B cell (primary cell): ENCODE measurements at regions of chr4 and their contacts with region 1.

Region 1: GRCh38 chr4:109702950-109703663 is at the start of gene CASP6:
- DNase-seq: peak; percentile 78
- ATAC-seq: peak; percentile 80
- H3K4me3 ChIP-seq: peak within 1 kb of the TSS; percentile 69 to 86 (median 78)
- H3K4me3 Mint-ChIP-seq: peak within 1 kb of the TSS; percentile 97
- H3K27ac ChIP-seq: peak within 1 kb of the TSS; percentile 11 to 57
- H3K27ac Mint-ChIP-seq: peak within 1 kb of the TSS; percentile 88
- H3K4me1 ChIP-seq: peaks cover 14 to 18% of the 10 kb centered on the region in 2 donors
- H3K4me1 Mint-ChIP-seq: peaks cover 22% of the 10 kb centered on the region
- H3K27me3 ChIP-seq: no peaks in the 10 kb centered on the region
- H3K27me3 Mint-ChIP-seq: no peaks in the 10 kb centered on the region
- CTCF ChIP-seq: peak; percentile 72
- total RNA-seq, gene CASP6: 7.7 and 8.3 TPM in 2 replicates

Region 2: GRCh38 chr4:109719604-109720003 is 16.5 kb after region 1 on chr4:
- CTCF ChIA-PET with region 1: no interaction called
- POLR2A ChIA-PET with region 1: no interaction called
- intact Hi-C with region 1: no loop called
- DNase-seq: no peak
- ATAC-seq: no peak
- H3K4me3 ChIP-seq: no peak overlapping the region
- H3K4me3 Mint-ChIP-seq: no peak overlapping the region
- H3K27ac ChIP-seq: no peak overlapping the region
- H3K27ac Mint-ChIP-seq: no peak overlapping the region
- H3K4me1 ChIP-seq: peaks cover 8 to 12% of the 10 kb centered on the region in 2 donors
- H3K4me1 Mint-ChIP-seq: peaks cover 7% of the 10 kb centered on the region
- H3K27me3 ChIP-seq: no peaks in the 10 kb centered on the region
- H3K27me3 Mint-ChIP-seq: no peaks in the 10 kb centered on the region
- CTCF ChIP-seq: no peak

Region 3: DNA sequence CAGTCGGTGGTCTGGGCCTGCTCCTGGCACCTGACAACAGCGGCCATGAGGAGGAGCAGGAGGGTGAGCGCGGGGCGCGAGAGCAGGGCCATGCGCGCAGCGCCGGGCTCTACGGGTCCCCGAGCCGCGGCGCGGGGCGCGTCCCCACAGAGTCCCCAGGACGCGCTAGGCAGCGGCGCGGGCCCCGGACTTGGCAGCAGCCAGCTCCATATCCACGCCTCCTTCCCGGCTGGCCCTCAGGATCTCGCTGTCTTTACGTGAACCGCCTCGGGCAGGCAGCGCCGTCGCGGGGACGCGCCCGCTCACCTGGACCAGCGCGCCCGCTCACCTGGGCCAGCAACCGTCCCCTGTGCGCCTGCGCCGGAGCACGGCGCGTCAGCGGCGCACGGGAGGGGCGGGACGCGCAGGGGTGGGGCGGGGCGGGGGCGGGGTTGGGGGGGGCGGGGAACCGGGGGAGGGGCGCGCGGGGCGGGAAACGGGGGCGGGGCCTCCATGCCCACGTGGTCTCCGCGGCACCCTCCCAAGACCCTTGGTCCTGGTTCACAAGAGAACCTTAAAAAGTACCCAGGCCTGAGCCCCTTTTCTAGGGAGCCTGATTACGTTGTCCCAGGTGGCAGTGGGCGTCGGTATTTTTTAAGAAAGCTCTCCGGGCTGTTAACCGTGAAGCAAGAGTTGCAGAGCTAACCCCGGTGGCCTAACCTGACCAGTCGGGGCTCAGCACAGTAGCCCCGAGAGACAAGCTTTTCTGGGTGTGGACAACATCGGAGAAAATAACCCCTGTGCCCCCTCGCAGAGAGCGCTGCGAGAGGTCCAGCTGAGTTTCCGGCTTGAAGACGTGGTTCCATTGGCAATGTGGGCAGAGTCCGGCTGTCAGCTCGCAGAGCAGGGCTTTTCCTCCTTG is 26.9 kb after region 1 on chr4 and contains the start of gene PLA2G12A:
- CTCF ChIA-PET with region 1: interaction called, 7 read pairs
- POLR2A ChIA-PET with region 1: interaction called, 6 read pairs
- intact Hi-C with region 1: loop called (anchors 1 kb)
- DNase-seq: peak; percentile 90
- ATAC-seq: peak; percentile 88
- H3K4me3 ChIP-seq: peak within 1 kb of the TSS; percentile 75 to 95 (median 83)
- H3K4me3 Mint-ChIP-seq: peak within 1 kb of the TSS; percentile 94
- H3K27ac ChIP-seq: peak within 1 kb of the TSS; percentile 41 to 68
- H3K27ac Mint-ChIP-seq: peak within 1 kb of the TSS; percentile 84
- H3K4me1 ChIP-seq: peaks cover 6 to 10% of the 10 kb centered on the region in 2 donors
- H3K4me1 Mint-ChIP-seq: peaks cover 13% of the 10 kb centered on the region
- H3K27me3 ChIP-seq: no peaks in the 10 kb centered on the region
- H3K27me3 Mint-ChIP-seq: no peaks in the 10 kb centered on the region
- CTCF ChIP-seq: no peak
- total RNA-seq, gene PLA2G12A: 7.9 and 8.5 TPM in 2 replicates

Region 4: DNA sequence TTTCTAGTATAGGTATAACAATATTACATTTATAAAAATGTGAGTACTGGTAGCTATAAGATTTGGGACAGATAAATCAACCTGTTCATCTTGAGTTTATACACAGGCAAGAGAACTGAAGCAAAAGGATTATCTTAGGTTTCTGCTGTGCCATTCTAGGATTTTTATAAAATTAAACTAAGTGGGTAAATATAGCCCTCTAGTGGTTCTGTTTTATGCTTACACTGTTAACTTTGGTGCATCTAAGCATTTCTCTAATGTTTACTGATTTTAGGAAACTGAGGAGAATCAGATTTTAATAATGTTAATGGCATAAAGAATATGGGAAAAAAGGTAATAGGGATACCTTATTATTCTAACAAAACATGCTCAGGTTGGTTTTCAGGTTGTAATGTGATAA is 123.6 kb after region 1 on chr4:
- CTCF ChIA-PET with region 1: interaction called, 3 read pairs
- POLR2A ChIA-PET with region 1: no interaction called
- intact Hi-C with region 1: loop called (anchors 1 kb)
- DNase-seq: peak; percentile 30
- ATAC-seq: peak; percentile 24
- H3K4me3 ChIP-seq: no peak overlapping the region
- H3K4me3 Mint-ChIP-seq: no peak overlapping the region
- H3K27ac ChIP-seq: no peak overlapping the region
- H3K27ac Mint-ChIP-seq: no peak overlapping the region
- H3K4me1 ChIP-seq: no peaks in the 10 kb centered on the region
- H3K4me1 Mint-ChIP-seq: no peaks in the 10 kb centered on the region
- H3K27me3 ChIP-seq: no peaks in the 10 kb centered on the region
- H3K27me3 Mint-ChIP-seq: no peaks in the 10 kb centered on the region
- CTCF ChIP-seq: peak; percentile 76

Region 5: GRCh38 chr4:110193822-110194761 is 491.0 kb after region 1 on chr4:
- CTCF ChIA-PET with region 1: no interaction called
- POLR2A ChIA-PET with region 1: no interaction called
- intact Hi-C with region 1: loop called (anchors 10 kb)
- DNase-seq: peak; percentile 82
- ATAC-seq: peak; percentile 78
- H3K4me3 ChIP-seq: no peak overlapping the region
- H3K4me3 Mint-ChIP-seq: peak overlapping the region; percentile 4
- H3K27ac ChIP-seq: peak overlapping the region; percentile 1 to 71
- H3K27ac Mint-ChIP-seq: peak overlapping the region; percentile 68
- H3K4me1 ChIP-seq: peaks cover 16 to 17% of the 10 kb centered on the region in 2 donors
- H3K4me1 Mint-ChIP-seq: peaks cover 30% of the 10 kb centered on the region
- H3K27me3 ChIP-seq: no peaks in the 10 kb centered on the region
- H3K27me3 Mint-ChIP-seq: no peaks in the 10 kb centered on the region
- CTCF ChIP-seq: no peak